Endothelial cell of umbilical vein (primary cell): ENCODE measurements at regions of chr11 and their contacts with region 1.

Region 1: GRCh38 chr11:61392981-61393595 is 701 bp downstream of the TMEM216 start:
- DNase-seq: peak; percentile 36
- H3K4me3 ChIP-seq: peak overlapping the region; percentile 71 to 77 (median 71)
- H3K27ac ChIP-seq: no peak overlapping the region
- H3K4me1 ChIP-seq: peaks cover 11% of the 10 kb centered on the region
- H3K27me3 ChIP-seq: no peaks in the 10 kb centered on the region
- CTCF ChIP-seq: peak; percentile 8 to 16
- POLR2A ChIP-seq: no peak

Region 2: GRCh38 chr11:61413496-61413895 is 20.4 kb after region 1 on chr11:
- CTCF ChIA-PET with region 1: interaction called, 3 read pairs
- POLR2A ChIA-PET with region 1: no interaction called
- dilution Hi-C with region 1: no loop called
- intact Hi-C with region 1: loop called (anchors 1 kb)
- DNase-seq: no peak
- H3K4me3 ChIP-seq: no peak overlapping the region
- H3K27ac ChIP-seq: no peak overlapping the region
- H3K4me1 ChIP-seq: peaks cover 12% of the 10 kb centered on the region
- H3K27me3 ChIP-seq: no peaks in the 10 kb centered on the region
- CTCF ChIP-seq: no peak
- POLR2A ChIP-seq: no peak